CD4-positive, alpha-beta T cell (primary cell): ENCODE measurements at regions of chr5 and their contacts with region 1.

Region 1: DNA sequence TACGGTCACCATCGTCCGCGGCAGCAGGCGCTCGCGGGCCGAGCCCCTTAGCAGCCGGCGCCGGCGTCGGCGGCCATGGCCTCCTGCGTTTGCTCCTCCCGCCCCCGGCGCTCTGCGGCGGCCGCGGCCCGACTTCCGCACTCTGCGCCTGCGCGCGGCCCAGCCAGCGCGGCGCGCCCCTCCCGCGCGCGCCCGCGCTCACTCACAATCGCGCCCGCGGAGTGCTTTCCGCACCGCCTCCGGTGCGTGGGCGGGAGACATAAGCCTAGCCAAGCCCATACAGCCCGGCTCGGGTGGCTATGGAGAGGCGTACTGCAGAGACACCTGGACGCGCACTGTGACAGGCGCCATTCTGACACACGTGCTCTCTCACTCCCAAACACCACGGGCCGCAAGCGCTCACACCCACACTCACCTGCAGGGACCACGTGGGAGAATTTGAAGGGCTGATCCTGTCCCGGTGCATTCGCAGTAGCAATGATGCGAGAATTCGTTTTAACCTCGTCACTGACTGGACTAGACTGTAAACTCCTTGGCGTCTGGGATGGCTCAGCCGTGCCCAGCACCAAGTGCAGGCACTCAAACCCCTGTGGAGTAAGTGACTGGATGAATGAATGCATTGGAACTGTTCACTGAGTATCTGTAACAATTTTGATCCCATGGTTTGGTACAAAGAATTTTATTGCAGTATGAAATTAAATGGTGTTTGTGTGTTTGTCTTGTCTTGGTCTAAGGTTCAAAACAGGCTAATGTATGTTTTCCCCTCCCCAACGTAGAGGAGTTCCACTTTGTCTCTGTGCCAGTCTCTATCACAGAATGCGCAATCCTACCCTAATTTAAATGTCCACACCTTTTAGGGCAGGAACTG is at the start of gene RNF145:
- DNase-seq: peak; percentile 81 to 98 (median 92)
- ATAC-seq: peak; percentile 69
- H3K4me3 ChIP-seq: peak within 1 kb of the TSS; percentile 80
- H3K4me3 Mint-ChIP-seq: peak within 1 kb of the TSS; percentile 95
- H3K27ac ChIP-seq: peak within 1 kb of the TSS; percentile 87 to 89
- H3K27ac Mint-ChIP-seq: peak within 1 kb of the TSS; percentile 98
- H3K4me1 ChIP-seq: peaks cover 10% of the 10 kb centered on the region
- H3K4me1 Mint-ChIP-seq: peaks cover 56% of the 10 kb centered on the region
- H3K27me3 ChIP-seq: no peaks in the 10 kb centered on the region
- H3K27me3 Mint-ChIP-seq: no peaks in the 10 kb centered on the region
- CTCF ChIP-seq: no peak
- total RNA-seq, gene RNF145: 83.7 to 94.4 TPM

Region 2: DNA sequence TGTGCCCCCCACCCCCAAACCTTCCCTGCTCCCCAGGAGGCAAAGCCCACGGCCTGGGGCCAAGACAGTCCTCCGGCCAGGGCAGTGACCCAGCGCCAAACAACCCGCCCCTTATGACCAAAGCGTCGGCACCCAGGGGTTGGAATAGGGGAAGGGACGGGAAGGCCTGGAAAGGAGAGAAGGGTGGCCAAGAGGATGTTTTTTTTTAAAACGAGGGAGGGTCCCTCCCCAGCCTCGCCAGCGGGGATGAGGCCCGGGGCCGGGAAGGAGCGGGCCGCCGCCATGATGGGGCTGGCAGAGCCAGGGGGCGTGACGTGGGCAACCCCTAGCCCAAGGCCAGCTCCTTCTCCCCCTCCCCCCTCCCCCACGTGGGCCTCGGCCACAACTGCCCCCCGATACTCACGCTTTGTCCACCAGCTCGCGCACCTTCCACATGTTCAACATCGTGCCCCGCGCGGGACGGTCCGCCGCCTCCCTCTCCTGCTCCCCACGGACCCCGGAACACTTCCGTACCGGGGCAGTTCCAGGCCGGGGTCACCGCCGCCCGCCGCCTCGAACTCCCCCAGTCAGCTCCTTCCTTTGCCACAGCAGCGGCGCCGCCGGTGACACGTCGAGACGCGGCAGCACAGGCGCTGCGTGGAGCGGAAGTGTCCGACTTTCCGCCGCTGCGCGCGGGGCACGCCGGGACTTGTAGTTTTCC is 1351.0 kb before region 1 on chr5 and contains the start of gene CLINT1:
- CTCF ChIA-PET with region 1: no interaction called
- POLR2A ChIA-PET with region 1: no interaction called
- intact Hi-C with region 1: loop called in 1 of 2 experiments (anchors 5 kb)
- DNase-seq: peak; percentile 78 to 94 (median 86)
- ATAC-seq: peak; percentile 95
- H3K4me3 ChIP-seq: peak within 1 kb of the TSS; percentile 84
- H3K4me3 Mint-ChIP-seq: peak within 1 kb of the TSS; percentile 99
- H3K27ac ChIP-seq: peak within 1 kb of the TSS; percentile 81 to 89
- H3K27ac Mint-ChIP-seq: peak within 1 kb of the TSS; percentile 94
- H3K4me1 ChIP-seq: peaks cover 40% of the 10 kb centered on the region
- H3K4me1 Mint-ChIP-seq: peaks cover 83% of the 10 kb centered on the region
- H3K27me3 ChIP-seq: no peaks in the 10 kb centered on the region
- H3K27me3 Mint-ChIP-seq: no peaks in the 10 kb centered on the region
- CTCF ChIP-seq: no peak
- total RNA-seq, gene CLINT1: 89.9 to 91.3 TPM

Region 3: DNA sequence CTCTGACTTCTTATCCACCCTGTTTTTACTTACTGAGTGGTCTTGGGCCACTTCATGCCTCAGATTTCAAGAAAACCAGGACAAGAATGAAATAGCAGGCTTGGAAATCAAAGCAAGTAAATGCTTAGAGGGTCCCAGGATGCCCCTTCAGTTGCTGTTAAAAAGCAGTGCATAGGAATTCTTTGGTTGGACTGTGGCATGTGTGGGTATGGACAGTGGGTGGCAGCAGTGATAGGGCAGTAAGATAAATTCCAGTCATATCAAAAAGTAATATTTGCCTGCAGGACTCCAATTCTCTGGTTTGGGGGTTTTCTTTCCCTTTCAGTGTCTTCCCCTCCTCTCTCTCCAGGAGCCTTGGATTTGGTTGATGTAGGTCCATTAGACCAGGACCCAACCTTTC is 1044.0 kb before region 1 on chr5:
- CTCF ChIA-PET with region 1: no interaction called
- POLR2A ChIA-PET with region 1: no interaction called
- intact Hi-C with region 1: no loop called
- DNase-seq: no peak
- ATAC-seq: no peak
- H3K4me3 ChIP-seq: no peak overlapping the region
- H3K4me3 Mint-ChIP-seq: no peak overlapping the region
- H3K27ac ChIP-seq: no peak overlapping the region
- H3K27ac Mint-ChIP-seq: no peak overlapping the region
- H3K4me1 ChIP-seq: no peaks in the 10 kb centered on the region
- H3K4me1 Mint-ChIP-seq: no peaks in the 10 kb centered on the region
- H3K27me3 ChIP-seq: peaks cover 3 to 4% of the 10 kb centered on the region in 2 experiments
- H3K27me3 Mint-ChIP-seq: peaks cover 21% of the 10 kb centered on the region
- CTCF ChIP-seq: no peak

Region 4: DNA sequence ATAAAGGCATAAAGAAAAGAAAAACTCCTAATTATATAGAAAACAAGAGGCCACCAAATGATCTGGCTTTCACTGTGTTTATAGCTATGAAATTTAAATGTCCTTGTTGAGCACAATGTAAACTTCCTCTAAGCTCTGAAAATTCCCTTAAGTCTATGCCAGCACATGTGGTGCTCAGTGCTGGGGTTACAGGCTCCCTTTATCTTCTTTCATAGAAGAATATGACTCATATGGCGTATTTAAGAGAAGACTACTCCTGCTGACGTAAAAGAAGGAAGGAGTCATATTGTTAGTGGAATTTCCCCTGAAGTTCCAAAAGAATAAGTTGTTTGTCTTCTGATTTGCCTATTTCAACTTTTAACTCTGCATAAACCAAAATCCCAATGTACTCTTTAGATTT is 30.7 kb before region 1 on chr5:
- CTCF ChIA-PET with region 1: no interaction called
- POLR2A ChIA-PET with region 1: interaction called, 21 read pairs
- intact Hi-C with region 1: loop called (anchors 2 kb)
- DNase-seq: peak in 5 of 14 experiments; percentile 13 to 77 (median 22)
- ATAC-seq: peak; percentile 70
- H3K4me3 ChIP-seq: no peak overlapping the region
- H3K4me3 Mint-ChIP-seq: peak overlapping the region; percentile 2
- H3K27ac ChIP-seq: peak overlapping the region in 1 of 2 donors; percentile 64
- H3K27ac Mint-ChIP-seq: peak overlapping the region; percentile 87
- H3K4me1 ChIP-seq: peaks cover 12% of the 10 kb centered on the region
- H3K4me1 Mint-ChIP-seq: peaks cover 89% of the 10 kb centered on the region
- H3K27me3 ChIP-seq: no peaks in the 10 kb centered on the region
- H3K27me3 Mint-ChIP-seq: no peaks in the 10 kb centered on the region
- CTCF ChIP-seq: no peak

Region 5: DNA sequence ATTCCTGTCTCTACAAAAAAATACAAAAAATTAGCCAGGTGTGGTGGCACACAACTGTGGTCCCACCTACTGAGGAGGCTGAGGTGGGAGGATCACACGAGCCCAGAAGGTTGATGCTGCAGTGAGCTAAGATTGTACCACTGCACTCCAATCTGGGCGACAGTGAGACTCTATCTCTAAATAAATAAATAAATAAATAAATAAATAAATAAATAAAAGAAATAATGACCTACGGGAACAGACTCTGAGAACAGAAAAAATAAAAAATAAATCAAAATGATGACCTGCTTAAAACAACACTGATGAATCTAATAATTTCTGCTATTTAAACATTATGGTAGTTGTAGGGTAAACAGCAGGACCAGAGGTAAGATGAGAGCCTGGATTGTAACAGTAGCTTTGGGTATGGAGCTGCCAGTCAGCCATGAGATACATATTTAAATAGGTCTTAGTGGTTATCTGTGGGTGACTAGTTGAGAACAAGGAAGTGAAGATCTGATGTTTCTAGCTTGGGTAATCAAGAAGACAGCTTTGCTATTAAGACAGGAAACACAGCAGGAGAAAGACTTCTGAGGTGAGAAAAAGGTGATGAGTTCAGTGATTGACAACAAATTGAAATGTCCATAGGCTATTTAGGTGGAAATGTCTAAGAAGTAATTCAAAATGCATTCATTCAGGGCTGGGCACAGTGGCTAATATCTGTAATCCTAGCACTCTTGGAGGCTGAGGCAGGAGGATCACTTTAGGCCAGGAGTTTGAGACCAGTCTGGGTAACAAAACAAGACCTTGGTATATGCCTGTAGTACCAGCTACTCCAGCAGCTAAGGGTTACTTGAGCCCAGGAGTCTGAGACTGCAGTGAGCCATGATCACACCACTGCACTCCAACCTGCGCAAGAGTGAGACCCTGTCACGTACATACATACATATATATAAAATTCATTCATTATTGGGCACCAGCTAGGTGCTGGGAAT is 11.3 kb before region 1 on chr5:
- CTCF ChIA-PET with region 1: interaction called, 3 read pairs
- POLR2A ChIA-PET with region 1: interaction called, 54 read pairs
- intact Hi-C with region 1: no loop called
- DNase-seq: peak in 4 of 14 experiments; percentile 7 to 64 (median 52)
- ATAC-seq: peak; percentile 90
- H3K4me3 ChIP-seq: no peak overlapping the region
- H3K4me3 Mint-ChIP-seq: peak overlapping the region; percentile 2
- H3K27ac ChIP-seq: peak overlapping the region in 1 of 2 donors; percentile 43
- H3K27ac Mint-ChIP-seq: peak overlapping the region; percentile 45
- H3K4me1 ChIP-seq: peaks cover 19% of the 10 kb centered on the region
- H3K4me1 Mint-ChIP-seq: peaks cover 83% of the 10 kb centered on the region
- H3K27me3 ChIP-seq: no peaks in the 10 kb centered on the region
- H3K27me3 Mint-ChIP-seq: no peaks in the 10 kb centered on the region
- CTCF ChIP-seq: no peak

Region 6: GRCh38 chr5:159262859-159263567 is 53.3 kb after region 1 on chr5 and contains the start of gene UBLCP1:
- CTCF ChIA-PET with region 1: interaction called, 4 read pairs
- POLR2A ChIA-PET with region 1: interaction called, 33 read pairs
- intact Hi-C with region 1: loop called (anchors 1 to 2 kb)
- DNase-seq: peak; percentile 55 to 94 (median 70)
- ATAC-seq: peak; percentile 90
- H3K4me3 ChIP-seq: peak within 1 kb of the TSS; percentile 74
- H3K4me3 Mint-ChIP-seq: peak within 1 kb of the TSS; percentile 88
- H3K27ac ChIP-seq: peak within 1 kb of the TSS; percentile 90 to 94
- H3K27ac Mint-ChIP-seq: peak within 1 kb of the TSS; percentile 96
- H3K4me1 ChIP-seq: peaks cover 18% of the 10 kb centered on the region
- H3K4me1 Mint-ChIP-seq: peaks cover 53% of the 10 kb centered on the region
- H3K27me3 ChIP-seq: no peaks in the 10 kb centered on the region
- H3K27me3 Mint-ChIP-seq: no peaks in the 10 kb centered on the region
- CTCF ChIP-seq: no peak
- total RNA-seq, gene UBLCP1: 16.5 to 19.0 TPM